Cardiac septum (tissue), 1 donor: ENCODE measurements at regions of chr21 and their contacts with region 1.

Region 1: GRCh38 chr21:38352536-38353219 is 95.9 kb downstream of the KCNJ15 start:
- DNase-seq: peak; percentile 87

Region 2: DNA sequence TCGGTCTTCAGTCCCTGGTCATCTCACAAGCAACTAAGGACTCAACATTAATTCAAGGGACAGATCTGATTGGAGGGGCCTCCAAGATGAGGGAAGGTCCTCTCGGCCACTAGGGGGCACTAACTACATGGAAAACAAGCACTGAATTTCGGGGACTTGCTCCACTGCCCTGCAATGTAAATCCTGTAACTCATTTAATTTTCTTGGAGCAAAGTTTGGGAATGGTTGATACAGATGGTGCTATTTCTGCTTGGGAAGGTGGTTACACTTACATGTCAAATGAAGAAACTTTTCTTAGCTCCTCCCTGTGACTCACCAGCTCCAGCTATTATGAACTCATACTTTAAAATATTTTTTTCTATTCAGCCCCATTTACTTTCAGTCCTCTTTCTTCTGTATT is 193.3 kb before region 1 on chr21:
- intact Hi-C with region 1: loop called (anchors 2 kb)
- DNase-seq: no peak

Region 3: GRCh38 chr21:38170280-38170679 is 182.4 kb before region 1 on chr21:
- intact Hi-C with region 1: loop called (anchors 5 kb)
- DNase-seq: no peak

Region 4: DNA sequence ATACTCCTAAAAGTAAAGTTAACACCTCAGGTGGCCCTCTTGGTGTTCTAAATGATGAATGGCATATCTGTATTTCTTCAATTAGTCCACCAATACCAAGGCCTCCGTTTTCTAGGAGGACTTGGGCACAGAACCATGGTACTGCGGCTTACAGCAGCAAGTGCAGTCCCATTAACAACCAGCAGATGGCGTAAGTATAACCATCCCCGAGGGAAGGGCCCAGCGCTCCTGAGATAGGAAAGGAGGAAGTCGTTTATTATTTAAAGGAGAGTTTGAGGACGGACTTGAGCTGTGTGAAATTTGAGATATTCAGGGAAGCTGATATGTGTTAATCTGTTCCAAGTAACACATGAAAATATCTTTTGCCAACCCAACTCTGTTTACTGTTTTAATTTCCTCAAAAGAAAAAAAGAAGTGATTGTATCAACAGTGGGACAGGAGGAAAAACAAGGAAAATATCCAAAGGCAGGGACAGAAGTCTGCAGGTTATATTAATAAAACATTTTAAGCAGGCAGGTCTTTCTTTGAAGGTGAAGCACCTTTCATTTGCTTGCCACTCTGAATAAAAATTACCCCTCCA is 133.5 kb before region 1 on chr21:
- intact Hi-C with region 1: loop called (anchors 1 kb)
- DNase-seq: peak; percentile 87

Region 5: GRCh38 chr21:38404168-38404567 is 51.5 kb after region 1 on chr21:
- intact Hi-C with region 1: no loop called
- DNase-seq: no peak